Gastrocnemius medialis (tissue), 4 donors: ENCODE measurements at regions of chr12 and their contacts with region 1.

Region 1: DNA sequence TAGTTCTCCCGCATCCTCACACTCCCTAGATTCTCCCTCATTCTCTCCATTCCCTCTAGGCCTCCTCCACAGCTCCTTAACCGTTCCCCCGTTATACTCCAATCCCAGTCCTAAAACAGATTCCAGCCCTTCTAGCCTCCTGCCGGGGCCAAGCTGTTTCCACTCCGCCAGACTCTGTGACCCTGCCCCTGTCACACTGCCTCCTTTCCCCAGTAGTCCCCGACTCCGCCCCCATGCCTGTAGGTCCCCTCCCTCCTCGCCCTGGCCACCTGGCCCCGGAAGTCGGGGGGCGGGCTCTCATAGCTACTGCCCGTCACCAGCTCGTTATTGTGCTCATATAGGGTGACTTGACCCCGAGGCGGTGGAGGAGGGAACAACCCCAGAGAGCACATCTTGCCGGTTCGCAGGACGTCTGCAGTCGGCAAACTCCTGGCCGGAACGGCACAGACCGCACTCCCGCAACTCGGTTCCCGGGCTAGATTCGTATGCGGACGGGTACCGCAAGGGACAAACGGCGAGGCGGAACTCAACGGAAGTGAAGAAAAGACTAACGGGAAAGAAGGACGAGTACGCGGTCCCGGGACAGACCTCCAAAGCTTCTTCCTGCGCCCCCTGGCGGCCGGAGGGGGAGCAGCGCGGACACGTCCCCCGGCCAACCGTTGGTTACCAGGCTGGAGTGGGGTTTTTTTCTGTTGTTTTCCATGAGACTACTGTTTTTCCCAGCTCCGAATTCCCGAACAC is at the start of gene AAAS:
- DNase-seq: peak; percentile 95 to 96
- ATAC-seq: peak; percentile 84 to 86
- H3K4me3 ChIP-seq: peak within 1 kb of the TSS; percentile 71 to 93 (median 90)
- H3K27ac ChIP-seq: peak within 1 kb of the TSS; percentile 84 to 97 (median 94)
- H3K4me1 ChIP-seq: peaks cover 23 to 37% of the 10 kb centered on the region in 2 donors
- H3K27me3 ChIP-seq: no peaks in the 10 kb centered on the region
- CTCF ChIP-seq: peak; percentile 97 to 100 (median 99)
- POLR2A ChIP-seq: peak; percentile 69 to 82
- total RNA-seq, gene AAAS: 30.5 to 47.9 (median 38.5) TPM

Region 2: DNA sequence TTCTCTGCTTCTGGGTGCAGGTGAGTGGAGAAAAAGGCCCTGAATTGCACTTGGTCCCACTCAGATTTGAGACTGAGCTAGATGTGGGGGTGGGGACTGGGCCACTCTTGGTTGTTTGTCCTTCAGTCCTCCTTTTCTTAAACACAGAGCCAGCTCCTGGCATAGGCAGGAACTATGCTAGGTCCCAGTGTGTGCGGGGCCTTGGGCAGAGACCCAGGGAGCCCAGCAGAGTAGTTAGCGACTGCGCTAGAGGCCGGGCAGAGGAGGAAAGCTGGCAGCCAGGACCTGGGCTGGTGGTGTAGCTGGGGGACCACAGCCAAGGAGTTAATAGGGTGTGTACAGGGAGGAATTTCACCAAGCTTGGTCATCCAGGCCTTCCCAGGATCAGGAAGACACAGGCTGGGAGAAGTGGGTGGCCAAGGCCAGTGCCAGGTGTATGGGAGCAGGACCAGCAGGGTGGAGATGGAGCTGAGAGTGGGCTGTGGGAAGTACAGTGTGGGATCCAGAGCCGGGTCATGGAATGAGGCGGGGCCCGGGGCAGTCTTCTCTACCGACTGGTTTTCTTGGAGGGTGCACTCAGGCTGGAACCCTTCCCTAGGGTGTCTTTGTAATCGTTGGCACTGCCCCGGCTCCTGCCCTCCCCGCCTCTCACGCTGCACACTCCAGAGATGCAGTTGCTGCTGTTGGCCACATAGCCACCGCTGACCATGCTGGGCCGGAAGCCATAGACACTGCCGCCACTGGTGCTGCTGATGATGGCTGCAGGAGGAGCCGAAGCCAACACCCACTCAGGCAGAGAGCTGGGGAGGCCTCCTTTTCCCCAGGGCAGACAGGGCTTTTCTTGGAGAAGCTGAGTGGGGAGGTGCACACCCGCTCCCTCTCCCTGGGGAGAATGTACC is 777.0 kb before region 1 on chr12:
- in situ Hi-C with region 1: no loop called
- intact Hi-C with region 1: no loop called
- DNase-seq: no peak
- ATAC-seq: no peak
- H3K4me3 ChIP-seq: no peak overlapping the region
- H3K27ac ChIP-seq: no peak overlapping the region
- H3K4me1 ChIP-seq: no peaks in the 10 kb centered on the region
- H3K27me3 ChIP-seq: no peaks in the 10 kb centered on the region
- CTCF ChIP-seq: no peak
- POLR2A ChIP-seq: no peak

Region 3: DNA sequence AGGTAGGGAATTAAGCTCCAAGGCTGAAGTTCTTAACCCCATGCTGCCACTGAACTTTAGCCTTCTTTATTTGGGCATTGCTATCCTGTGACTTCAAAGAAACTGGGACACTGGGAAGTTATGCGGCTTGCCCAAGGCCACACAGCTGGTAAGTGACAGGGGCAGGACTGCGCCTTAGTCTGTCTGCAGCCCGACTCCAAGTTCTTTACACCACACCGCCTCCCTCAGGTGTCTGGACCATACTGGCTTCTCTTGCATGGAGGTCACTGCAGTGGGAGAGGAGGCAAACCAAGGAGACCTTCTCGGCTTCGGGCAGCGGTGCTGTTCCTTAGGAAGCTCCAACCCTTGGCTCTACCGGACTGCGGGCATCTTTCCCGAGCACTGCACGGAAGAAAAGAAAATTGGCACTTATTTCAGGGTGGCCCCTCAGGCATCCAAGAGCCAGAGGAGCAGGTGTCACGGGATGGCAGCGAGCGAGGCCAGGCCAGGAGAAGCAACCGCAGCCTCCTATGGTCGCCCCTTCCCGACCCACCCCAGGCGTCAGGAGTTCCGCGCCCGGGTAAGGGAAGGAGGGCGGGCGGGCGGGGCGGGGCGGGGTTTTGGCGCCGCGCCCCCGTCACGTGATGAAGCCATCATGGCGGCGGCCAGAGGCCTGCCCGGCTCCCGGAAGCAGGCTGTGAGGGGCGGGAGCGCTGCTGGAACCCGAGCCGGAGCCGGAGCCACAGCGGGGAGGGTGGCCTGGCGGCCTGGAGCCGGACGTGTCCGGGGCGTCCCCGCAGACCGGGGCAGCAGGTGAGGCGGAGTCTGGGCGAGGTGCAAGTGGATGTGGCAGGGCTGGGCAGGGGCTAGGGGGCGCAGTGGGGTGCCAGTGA is 69.5 kb before region 1 on chr12:
- in situ Hi-C with region 1: no loop called
- intact Hi-C with region 1: loop called (anchors 1 kb)
- DNase-seq: peak; percentile 73 to 81
- ATAC-seq: peak; percentile 91 to 96
- H3K4me3 ChIP-seq: peak overlapping the region; percentile 67 to 85 (median 71)
- H3K27ac ChIP-seq: peak overlapping the region; percentile 92 to 97 (median 94)
- H3K4me1 ChIP-seq: peaks cover 16 to 17% of the 10 kb centered on the region in 2 donors
- H3K27me3 ChIP-seq: no peaks in the 10 kb centered on the region
- CTCF ChIP-seq: peak; percentile 20 to 46 (median 33)
- POLR2A ChIP-seq: peak; percentile 36 to 47

Region 4: DNA sequence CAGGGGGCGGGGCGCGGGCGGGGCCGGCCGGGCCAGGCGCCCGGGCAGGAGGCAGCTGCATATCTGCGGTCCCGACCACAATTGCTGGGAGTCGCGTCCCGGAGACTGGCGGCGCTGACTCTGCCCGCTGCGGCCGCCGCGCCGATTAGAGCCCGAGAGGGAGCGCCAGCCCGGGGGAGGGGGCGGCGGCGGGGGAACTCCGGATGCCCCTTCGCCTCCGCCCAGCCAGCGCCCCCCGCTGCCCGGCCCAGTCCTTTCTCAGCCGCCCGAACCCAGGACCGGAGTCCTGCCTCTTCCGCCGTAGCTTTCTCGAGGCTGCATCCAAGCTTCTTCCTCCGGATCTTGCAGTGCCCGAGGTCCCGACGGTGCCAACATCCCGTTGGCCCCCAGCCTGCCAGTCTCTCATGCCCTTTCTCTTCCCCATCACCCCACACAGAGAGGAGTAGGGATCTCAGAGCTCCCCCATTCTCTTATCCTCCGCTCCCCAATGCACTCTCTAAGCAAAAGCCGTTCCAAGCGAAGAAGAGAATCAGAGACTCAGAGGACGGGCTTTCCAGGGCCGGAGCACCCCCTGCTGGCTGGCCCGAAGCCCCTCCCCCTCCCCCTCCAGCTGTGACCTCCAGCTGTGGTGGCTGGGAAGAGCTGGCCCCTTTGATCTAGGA is 23.7 kb after region 1 on chr12:
- in situ Hi-C with region 1: no loop called
- intact Hi-C with region 1: loop called (anchors 1 kb)
- DNase-seq: peak; percentile 57 to 63
- ATAC-seq: peak; percentile 94 to 96
- H3K4me3 ChIP-seq: peak overlapping the region; percentile 66 to 90 (median 74)
- H3K27ac ChIP-seq: peak overlapping the region; percentile 60 to 76 (median 72)
- H3K4me1 ChIP-seq: peaks cover 6 to 13% of the 10 kb centered on the region in 2 donors
- H3K27me3 ChIP-seq: no peaks in the 10 kb centered on the region
- CTCF ChIP-seq: peak; percentile 76 to 80 (median 76)
- POLR2A ChIP-seq: peak; percentile 39 to 50

Region 5: DNA sequence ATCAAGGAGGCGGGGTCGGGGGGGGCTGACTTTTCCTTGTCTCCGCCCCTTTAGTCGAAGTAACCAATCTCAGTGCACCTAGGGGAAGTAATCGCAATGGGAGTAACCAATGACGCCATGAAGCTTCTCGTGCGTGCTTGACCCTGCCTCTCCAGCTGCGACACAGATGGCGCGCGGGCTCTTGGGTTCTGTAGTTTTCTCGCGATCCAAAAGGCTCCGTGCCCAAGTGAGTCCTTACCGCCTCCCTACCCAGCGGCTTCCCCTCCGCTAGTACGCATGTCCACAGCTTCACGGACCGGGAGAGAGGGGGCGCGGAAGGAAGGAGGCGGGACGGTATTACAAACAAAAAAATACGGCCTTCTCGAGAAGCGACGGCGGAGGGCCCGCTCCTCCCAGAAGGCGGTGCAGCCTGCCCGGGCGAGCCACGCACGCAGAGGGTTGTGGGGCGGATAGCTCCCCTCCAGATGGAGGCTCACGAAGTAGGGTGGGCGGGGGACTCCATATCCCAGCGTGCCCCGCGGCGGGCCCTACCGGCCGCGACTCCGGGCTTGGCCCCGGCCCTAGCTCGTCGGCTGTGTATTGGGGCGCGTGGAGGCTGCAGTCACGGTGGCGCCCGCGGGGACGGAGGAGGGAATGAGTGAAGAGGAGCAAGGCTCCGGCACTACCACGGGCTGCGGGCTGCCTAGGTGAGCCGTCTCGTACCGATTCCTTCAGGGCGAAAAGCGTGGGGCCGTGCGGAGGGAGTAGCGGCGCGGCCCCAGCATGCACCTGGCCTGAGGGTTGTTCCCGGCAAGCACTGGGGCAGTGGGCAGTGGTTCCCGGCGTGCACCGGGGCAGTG is 179.8 kb after region 1 on chr12 and contains the start of gene TARBP2:
- in situ Hi-C with region 1: loop called in 1 of 4 experiments (anchors 10 kb)
- intact Hi-C with region 1: loop called (anchors 2 kb)
- DNase-seq: peak; percentile 99
- ATAC-seq: peak; percentile 89 to 93
- H3K4me3 ChIP-seq: peak within 1 kb of the TSS; percentile 73 to 84 (median 82)
- H3K27ac ChIP-seq: peak within 1 kb of the TSS; percentile 90 to 97 (median 92)
- H3K4me1 ChIP-seq: peaks cover 24 to 25% of the 10 kb centered on the region in 2 donors
- H3K27me3 ChIP-seq: no peaks in the 10 kb centered on the region
- CTCF ChIP-seq: peak in 1 of 5 experiments; percentile 25
- POLR2A ChIP-seq: peak; percentile 47 to 68
- total RNA-seq, gene TARBP2: 6.8 to 17.4 (median 11.6) TPM

Region 6: GRCh38 chr12:53675651-53676453 is 354.6 kb after region 1 on chr12 and contains the start of gene ATP5MC2:
- in situ Hi-C with region 1: no loop called
- intact Hi-C with region 1: loop called (anchors 1 kb)
- DNase-seq: peak; percentile 98
- ATAC-seq: peak; percentile 89 to 93
- H3K4me3 ChIP-seq: peak within 1 kb of the TSS; percentile 81 to 84 (median 82)
- H3K27ac ChIP-seq: peak within 1 kb of the TSS; percentile 93 to 99 (median 96)
- H3K4me1 ChIP-seq: peaks cover 26 to 31% of the 10 kb centered on the region in 2 donors
- H3K27me3 ChIP-seq: no peaks in the 10 kb centered on the region
- CTCF ChIP-seq: peak; percentile 95 to 99 (median 99)
- POLR2A ChIP-seq: peak; percentile 59 to 72
- total RNA-seq, gene ATP5MC2: 428 to 714 (median 580) TPM